ENCODE measurements at regions of chr4 and their contacts with region 1.

Region 1: DNA sequence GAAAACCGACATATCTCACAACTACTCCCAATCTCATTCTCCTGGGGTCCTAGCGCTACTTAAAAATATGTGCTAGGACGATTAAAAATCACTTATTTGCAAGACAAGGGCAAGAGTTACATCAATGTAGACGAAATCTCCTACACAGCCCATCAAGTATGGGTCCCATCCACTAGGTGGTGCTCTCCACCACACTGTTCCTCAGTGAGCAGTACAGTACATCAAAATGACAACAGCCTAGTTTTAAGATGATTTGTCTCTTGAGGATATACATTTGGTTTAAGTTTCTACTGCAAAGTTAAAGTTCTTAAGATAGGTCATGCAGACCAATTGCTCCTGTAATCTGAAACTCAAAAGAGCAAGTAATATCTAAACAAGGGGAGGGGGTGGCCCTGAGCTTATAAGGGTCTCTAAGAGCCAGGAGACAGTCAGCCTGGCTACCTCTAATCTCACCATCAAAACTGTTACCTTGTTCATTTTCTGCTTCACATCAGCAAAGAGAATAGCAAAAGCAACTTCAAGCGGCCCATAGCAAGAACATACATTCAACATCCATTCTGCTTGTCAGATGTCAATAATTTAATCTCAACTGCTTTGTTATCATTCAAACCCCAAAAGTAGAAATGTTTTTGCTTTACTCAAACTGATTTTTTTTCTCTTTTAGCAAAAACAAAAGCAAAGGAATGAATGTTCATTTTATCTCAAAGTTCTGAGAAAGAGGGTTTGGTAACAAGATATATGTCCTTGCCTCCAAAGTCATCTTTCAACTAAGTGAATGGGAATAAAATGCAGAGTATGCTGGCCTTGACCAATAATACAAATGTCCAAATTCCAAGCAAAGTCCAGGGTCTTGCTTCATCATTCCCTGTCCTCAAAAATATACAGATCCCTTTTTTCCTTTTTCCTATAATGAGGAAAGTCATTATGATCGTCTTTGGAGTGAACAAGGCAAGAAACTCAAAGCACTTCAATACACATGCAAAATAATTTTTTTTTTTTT is 53.1 kb downstream of the STX18 start:
- DNase-seq: peak; percentile 51
- H3K4me3 Mint-ChIP-seq: no peak overlapping the region
- H3K27ac Mint-ChIP-seq: no peak overlapping the region
- H3K4me1 Mint-ChIP-seq: peaks cover 8% of the 10 kb centered on the region
- H3K27me3 Mint-ChIP-seq: no peaks in the 10 kb centered on the region

Region 2: DNA sequence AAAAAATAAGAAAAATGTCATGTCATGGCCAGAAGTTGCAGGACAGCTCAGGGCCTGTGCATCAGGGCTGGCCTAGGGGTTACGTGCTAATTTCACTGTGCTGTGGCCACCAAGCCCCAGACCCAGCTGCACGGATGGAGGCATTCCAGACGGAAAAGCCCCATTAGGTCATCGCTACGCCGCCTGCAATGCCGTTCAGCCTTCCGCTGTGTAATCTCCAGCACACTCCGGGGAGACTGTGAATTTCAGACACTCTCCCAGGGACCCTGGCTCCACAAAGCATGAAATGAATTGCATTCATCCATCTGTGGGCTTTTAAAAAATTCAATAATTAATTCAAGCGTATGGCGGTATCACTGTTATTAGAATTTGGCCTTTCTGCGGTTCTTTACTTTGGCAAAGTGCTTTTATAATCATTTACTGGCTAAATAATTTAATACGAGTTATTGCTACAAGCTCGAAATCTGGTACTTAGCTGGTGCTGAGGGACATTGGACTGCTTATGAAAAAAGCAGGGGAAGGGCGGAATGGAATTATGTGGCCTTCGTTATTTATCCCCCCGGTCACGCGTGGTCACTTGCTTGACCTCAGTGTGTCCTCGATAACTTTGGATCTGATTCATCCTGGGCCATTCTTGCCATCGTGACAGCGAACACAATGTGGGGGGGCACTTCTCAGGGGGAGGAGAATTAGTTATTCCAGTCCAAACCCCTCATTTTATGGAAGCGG is 110.8 kb before region 1 on chr4:
- intact Hi-C with region 1: no loop called
- DNase-seq: no peak
- H3K4me3 Mint-ChIP-seq: no peak overlapping the region
- H3K27ac Mint-ChIP-seq: no peak overlapping the region
- H3K4me1 Mint-ChIP-seq: no peaks in the 10 kb centered on the region
- H3K27me3 Mint-ChIP-seq: peaks cover 12% of the 10 kb centered on the region

Region 3: DNA sequence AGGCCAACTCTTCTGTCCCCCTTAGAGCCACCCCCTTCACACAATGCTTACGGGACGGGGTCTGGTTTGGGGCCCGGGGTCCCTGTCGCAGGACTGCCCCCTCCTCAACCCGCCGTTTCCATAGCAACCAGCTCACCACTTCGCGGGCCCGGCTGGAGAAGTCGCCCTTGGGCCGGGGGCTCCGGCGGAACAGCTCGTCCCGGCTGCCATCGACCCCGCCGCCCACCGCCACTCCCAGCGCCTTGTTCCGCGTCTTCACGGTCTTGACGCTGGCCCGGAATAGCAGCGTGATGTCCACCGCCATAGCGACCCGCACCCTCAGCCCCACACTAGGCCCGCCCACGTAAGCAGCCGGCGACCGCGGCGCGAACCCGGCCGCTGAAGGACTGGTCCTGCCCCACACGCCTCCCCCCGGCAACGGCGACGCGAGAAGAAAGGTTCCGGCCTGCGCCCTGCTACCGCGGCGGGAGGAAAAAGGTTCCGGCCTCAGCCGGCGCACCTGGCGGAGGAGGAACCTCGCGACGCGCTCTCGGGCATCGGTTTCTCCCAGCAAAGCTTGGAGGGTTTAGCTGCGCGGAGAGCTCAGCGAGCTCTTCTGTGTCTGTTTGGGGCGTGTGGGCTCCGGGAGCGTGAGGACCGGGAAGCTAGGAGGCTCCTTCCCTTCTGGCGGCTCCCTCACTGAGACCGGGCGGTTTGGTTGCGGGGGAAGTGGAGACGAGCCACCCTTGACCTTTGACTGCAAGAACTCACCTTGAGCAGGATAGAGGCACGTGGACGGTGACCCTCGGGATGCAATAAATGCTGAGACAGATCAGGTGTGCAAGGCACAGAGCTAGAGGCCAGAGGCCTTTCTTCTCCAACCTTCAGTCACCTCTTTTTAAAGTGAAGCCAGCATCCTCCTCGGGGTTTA is 53.2 kb after region 1 on chr4 and contains the start of gene STX18:
- intact Hi-C with region 1: loop called (anchors 1 kb)
- DNase-seq: peak; percentile 85
- H3K4me3 Mint-ChIP-seq: peak within 1 kb of the TSS; percentile 98
- H3K27ac Mint-ChIP-seq: peak within 1 kb of the TSS; percentile 98
- H3K4me1 Mint-ChIP-seq: peaks cover 46% of the 10 kb centered on the region
- H3K27me3 Mint-ChIP-seq: no peaks in the 10 kb centered on the region
- total RNA-seq, gene STX18: 34.6 and 35.4 TPM in 2 replicates

Region 4: DNA sequence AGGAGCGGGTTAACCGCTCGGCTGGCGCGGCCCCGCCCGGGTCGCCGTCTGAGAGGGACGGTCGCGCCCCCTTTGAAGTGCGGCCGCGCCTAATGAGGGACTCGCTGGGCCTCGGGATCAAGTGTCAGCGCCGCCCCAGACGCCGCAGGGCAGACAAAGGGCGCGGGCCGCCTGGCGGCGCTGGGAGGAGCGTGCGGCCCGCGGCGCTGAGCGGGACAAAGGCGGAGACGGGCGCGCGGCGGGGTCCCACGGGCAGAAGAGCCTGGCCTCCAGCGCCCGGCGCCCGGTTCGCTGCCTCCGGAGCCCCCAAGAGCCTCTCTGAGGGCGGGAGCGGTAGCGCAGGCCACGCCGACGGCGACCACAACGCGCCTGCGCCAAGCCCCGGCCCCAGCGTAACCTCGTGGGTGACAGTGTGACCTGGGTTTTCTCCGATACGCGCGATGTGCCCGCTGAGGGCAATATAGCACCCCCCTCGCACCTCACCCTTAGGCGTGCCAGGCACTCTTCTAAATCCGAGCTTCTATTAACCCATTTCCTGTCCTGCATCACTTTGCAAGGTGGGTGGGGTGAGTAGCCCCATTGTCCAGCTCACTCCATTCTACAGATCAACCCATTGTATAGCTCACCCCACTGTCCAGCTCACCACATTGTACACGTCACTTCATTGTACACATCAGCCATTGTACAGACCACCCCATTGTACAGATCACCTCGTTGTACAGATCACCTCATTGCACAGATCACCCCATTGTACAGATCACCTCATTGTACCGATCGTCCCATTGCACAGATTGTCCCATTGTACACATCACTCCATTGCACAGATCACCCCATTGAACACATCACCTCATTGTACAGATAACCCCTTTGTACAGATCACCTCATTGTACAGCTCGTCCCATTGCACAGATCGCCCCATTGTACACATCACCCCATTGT is 86.8 kb after region 1 on chr4:
- intact Hi-C with region 1: loop called (anchors 2 kb)
- DNase-seq: peak; percentile 10
- H3K4me3 Mint-ChIP-seq: peak overlapping the region; percentile 69
- H3K27ac Mint-ChIP-seq: no peak overlapping the region
- H3K4me1 Mint-ChIP-seq: peaks cover 6% of the 10 kb centered on the region
- H3K27me3 Mint-ChIP-seq: peaks cover 7% of the 10 kb centered on the region

Region 5: GRCh38 chr4:4666693-4667621 is 178.3 kb after region 1 on chr4:
- intact Hi-C with region 1: loop called (anchors 5 kb)
- DNase-seq: no peak
- H3K4me3 Mint-ChIP-seq: no peak overlapping the region
- H3K27ac Mint-ChIP-seq: no peak overlapping the region
- H3K4me1 Mint-ChIP-seq: no peaks in the 10 kb centered on the region
- H3K27me3 Mint-ChIP-seq: no peaks in the 10 kb centered on the region

Region 6: DNA sequence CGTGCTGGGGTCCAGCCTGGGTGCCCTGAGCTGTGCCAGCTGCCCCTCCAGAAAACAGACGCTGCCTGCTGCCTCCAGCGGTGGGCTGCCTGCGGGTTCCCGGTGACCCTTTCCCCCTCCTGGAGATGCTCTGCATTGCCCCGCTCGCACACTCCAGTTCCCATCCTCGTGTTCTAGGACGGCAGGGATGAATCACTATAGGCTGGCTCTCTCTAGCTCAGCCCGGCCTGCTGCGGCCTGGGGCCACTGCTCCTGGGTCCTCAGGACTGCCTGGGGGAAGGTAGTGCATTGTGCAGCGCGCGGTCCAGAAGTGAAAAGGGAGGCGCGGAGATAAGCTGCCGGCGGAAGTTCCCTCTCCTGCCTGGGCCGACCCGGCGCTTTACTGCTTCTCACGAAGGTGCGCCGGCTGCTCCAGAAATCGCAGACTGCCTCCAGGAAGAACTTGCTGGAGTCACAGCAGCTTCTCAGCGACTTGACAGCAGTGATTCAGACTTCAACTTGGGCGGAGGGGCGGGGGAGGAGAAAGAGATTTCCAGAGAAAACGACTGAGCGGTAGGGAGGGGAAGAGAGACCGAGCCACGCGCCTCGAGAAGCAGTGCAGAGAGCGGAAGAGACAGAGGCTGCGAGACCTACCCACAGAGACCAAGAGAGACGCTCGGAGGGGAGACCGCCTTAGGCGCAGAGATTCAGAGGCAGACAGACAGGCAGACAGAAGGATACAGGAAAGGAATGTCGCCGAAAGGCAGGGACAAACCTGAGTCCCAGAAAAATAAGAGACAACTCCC is 364.1 kb after region 1 on chr4:
- intact Hi-C with region 1: loop called (anchors 1 kb)
- DNase-seq: no peak
- H3K4me3 Mint-ChIP-seq: peak overlapping the region; percentile 77
- H3K27ac Mint-ChIP-seq: peak overlapping the region; percentile 31
- H3K4me1 Mint-ChIP-seq: peaks cover 11% of the 10 kb centered on the region
- H3K27me3 Mint-ChIP-seq: peaks cover 46% of the 10 kb centered on the region

Region 7: GRCh38 chr4:4995103-4995907 is 506.6 kb after region 1 on chr4:
- intact Hi-C with region 1: loop called (anchors 1 kb)
- DNase-seq: peak; percentile 9
- H3K4me3 Mint-ChIP-seq: no peak overlapping the region
- H3K27ac Mint-ChIP-seq: no peak overlapping the region
- H3K4me1 Mint-ChIP-seq: no peaks in the 10 kb centered on the region
- H3K27me3 Mint-ChIP-seq: peaks cover 6% of the 10 kb centered on the region

Measured in activated T-helper 1 cell treated with anti-CD3 and anti-CD28 coated beads, Interleukin-12 subunit alpha, Interleukin-12 subunit beta, Interleukin-2, Interleukin-4 antibody, amounts not matched to agents 30 ng/mL and 10 ng/mL and 1 ng/mL, durations not matched to agents 14 hours and 24 hours and 36 hours (primary cell).